CD4-positive, alpha-beta T cell (primary cell): ENCODE measurements at regions of chr19 and their contacts with region 1.

Region 1: DNA sequence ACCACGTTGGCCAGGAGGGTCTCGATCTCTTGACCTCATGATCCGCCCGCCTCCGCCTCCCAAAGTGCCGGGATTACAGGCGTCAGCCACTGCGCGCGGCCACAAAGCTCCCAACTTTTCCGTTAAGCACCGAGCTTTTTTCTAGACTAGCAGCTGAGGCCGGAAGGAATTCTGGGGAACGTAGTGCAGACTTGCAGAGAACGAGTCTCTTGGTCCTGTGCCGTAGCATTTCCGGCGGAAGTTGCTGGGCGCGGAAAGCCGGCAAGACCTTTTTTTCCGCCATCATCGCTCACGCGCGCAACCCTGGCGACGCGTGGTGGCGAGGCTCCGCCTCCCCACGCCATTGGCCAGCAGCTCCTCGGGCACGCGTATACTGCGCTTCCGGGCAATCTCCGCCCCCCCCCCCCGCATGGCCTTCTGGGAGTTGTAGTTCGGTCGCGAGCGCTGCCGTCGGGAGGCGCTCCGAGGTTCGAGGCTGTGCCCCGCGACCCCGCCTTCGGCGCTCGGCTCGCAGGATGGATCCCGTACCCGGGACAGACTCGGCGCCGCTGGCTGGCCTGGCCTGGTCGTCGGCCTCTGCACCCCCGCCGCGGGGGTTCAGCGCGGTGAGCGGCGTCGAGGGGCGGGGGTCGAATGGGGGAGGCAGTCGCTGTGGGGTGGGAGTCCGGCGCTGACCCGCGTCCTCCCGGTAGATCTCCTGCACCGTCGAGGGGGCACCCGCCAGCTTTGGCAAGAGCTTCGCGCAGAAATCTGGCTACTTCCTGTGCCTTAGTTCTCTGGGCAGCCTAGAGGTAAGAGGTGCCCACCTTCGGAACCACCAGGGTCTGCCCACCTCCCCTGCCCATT is at the start of gene MVB12A:
- DNase-seq: peak; percentile 88 to 100 (median 95)
- ATAC-seq: peak; percentile 97
- H3K4me3 ChIP-seq: peak within 1 kb of the TSS; percentile 84
- H3K4me3 Mint-ChIP-seq: peak within 1 kb of the TSS; percentile 94
- H3K27ac ChIP-seq: peak within 1 kb of the TSS in 1 of 2 donors; percentile 32
- H3K27ac Mint-ChIP-seq: peak within 1 kb of the TSS; percentile 80
- H3K4me1 ChIP-seq: peaks cover 23% of the 10 kb centered on the region
- H3K4me1 Mint-ChIP-seq: peaks cover 19% of the 10 kb centered on the region
- H3K27me3 ChIP-seq: no peaks in the 10 kb centered on the region
- H3K27me3 Mint-ChIP-seq: no peaks in the 10 kb centered on the region
- CTCF ChIP-seq: no peak
- total RNA-seq, gene MVB12A: 9.8 to 10.7 TPM

Region 2: GRCh38 chr19:17201913-17202648 is 217.8 kb before region 1 on chr19:
- CTCF ChIA-PET with region 1: no interaction called
- POLR2A ChIA-PET with region 1: no interaction called
- intact Hi-C with region 1: no loop called
- DNase-seq: peak in 2 of 14 experiments; percentile 41 to 59
- ATAC-seq: peak; percentile 27
- H3K4me3 ChIP-seq: no peak overlapping the region
- H3K4me3 Mint-ChIP-seq: no peak overlapping the region
- H3K27ac ChIP-seq: no peak overlapping the region
- H3K27ac Mint-ChIP-seq: no peak overlapping the region
- H3K4me1 ChIP-seq: no peaks in the 10 kb centered on the region
- H3K4me1 Mint-ChIP-seq: no peaks in the 10 kb centered on the region
- H3K27me3 ChIP-seq: no peaks in the 10 kb centered on the region
- H3K27me3 Mint-ChIP-seq: no peaks in the 10 kb centered on the region
- CTCF ChIP-seq: no peak

Region 3: GRCh38 chr19:17336872-17337722 is 82.7 kb before region 1 on chr19 and contains the start of gene GTPBP3:
- CTCF ChIA-PET with region 1: no interaction called
- POLR2A ChIA-PET with region 1: interaction called, 7 read pairs
- intact Hi-C with region 1: loop called in 1 of 2 experiments (anchors 1 kb)
- DNase-seq: peak; percentile 92 to 98 (median 95)
- ATAC-seq: peak; percentile 89
- H3K4me3 ChIP-seq: peak within 1 kb of the TSS; percentile 71
- H3K4me3 Mint-ChIP-seq: peak within 1 kb of the TSS; percentile 93
- H3K27ac ChIP-seq: peak within 1 kb of the TSS; percentile 73 to 79
- H3K27ac Mint-ChIP-seq: peak within 1 kb of the TSS; percentile 86
- H3K4me1 ChIP-seq: peaks cover 54% of the 10 kb centered on the region
- H3K4me1 Mint-ChIP-seq: peaks cover 36% of the 10 kb centered on the region
- H3K27me3 ChIP-seq: no peaks in the 10 kb centered on the region
- H3K27me3 Mint-ChIP-seq: no peaks in the 10 kb centered on the region
- CTCF ChIP-seq: no peak
- total RNA-seq, gene GTPBP3: 21.2 to 24.0 TPM

Region 4: GRCh38 chr19:17405250-17406038 is 14.4 kb before region 1 on chr19 and contains the start of gene BST2:
- CTCF ChIA-PET with region 1: interaction called, 8 read pairs
- POLR2A ChIA-PET with region 1: interaction called, 26 read pairs
- intact Hi-C with region 1: no loop called
- DNase-seq: peak in 11 of 14 experiments; percentile 17 to 90 (median 53)
- ATAC-seq: peak; percentile 79
- H3K4me3 ChIP-seq: peak within 1 kb of the TSS; percentile 72
- H3K4me3 Mint-ChIP-seq: peak within 1 kb of the TSS; percentile 95
- H3K27ac ChIP-seq: peak within 1 kb of the TSS; percentile 71 to 78
- H3K27ac Mint-ChIP-seq: peak within 1 kb of the TSS; percentile 86
- H3K4me1 ChIP-seq: peaks cover 63% of the 10 kb centered on the region
- H3K4me1 Mint-ChIP-seq: peaks cover 41% of the 10 kb centered on the region
- H3K27me3 ChIP-seq: no peaks in the 10 kb centered on the region
- H3K27me3 Mint-ChIP-seq: no peaks in the 10 kb centered on the region
- CTCF ChIP-seq: no peak
- total RNA-seq, gene BST2: 16.1 to 16.8 TPM